Sciatic nerve (tissue), 2 donors: ENCODE measurements at regions of chr13 and their contacts with region 1.

Region 1: GRCh38 chr13:76594435-76594834 is 291.8 kb downstream of the KCTD12 start:
- DNase-seq: no peak
- ATAC-seq: no peak

Region 2: DNA sequence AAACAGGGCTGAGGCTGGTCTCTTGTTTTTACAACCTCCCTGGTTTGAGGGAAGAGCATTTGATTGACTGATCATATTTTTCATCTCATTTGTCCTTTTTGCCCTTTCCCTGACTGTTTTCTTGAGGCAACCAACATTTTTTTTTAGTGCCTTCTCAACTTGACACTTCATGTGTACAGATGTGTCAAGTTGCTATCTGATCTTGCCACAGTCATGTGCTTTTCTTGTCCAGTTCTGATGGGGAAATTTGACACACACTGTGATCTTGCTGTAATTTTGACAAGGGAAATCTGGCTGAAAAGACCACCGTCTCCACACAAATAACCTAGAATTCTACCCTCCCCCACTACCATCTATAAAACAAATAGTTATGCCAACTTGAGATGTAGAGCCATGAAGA is 37.8 kb before region 1 on chr13:
- intact Hi-C with region 1: loop called (anchors 2 kb)
- DNase-seq: no peak
- ATAC-seq: no peak